PC-9 (cell line): ENCODE measurements at regions of chr1 and their contacts with region 1.

Region 1: DNA sequence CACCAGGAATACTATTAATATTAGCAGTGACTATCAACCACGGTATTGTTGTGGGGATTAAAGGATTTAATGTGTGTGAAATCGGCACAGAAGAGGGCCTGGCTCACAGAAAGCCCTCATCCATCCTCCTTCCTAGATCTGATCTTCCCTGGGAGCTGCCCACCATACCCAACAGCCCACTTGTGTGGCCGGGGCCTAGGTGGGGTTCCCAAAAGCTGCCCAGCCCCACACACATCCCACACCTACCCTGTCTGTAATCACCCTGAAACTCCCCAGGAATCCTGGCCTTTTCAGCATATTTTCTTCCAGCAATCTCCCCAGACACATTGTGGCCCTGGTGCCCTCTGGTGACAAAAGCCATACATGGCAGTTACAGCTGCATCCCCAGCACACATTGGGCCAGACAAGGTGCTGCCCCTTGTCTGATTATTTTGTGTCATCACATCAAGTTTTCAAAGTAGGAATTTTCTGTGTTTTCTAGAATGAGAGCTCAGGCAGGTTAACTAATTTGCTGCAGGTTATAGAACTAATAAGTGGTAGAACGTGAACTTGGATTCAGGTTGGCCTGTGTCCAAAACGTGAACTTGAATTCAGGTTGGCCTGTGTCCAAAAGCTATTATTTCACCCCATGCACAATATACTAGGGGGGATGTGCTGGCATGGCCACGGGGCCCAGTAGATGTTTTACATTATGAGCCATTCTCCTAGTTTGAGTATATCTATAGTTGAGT is 5.3 kb upstream of the SLC6A9 start:
- DNase-seq: peak; percentile 59 to 77
- H3K4me3 ChIP-seq: no peak overlapping the region
- H3K27ac ChIP-seq: peak overlapping the region; percentile 20; the same call in 1 of the 2 replicates
- H3K4me1 ChIP-seq: peaks cover 27% of the 10 kb centered on the region
- H3K27me3 ChIP-seq: no peaks in the 10 kb centered on the region
- CTCF ChIP-seq: peak; percentile 89

Region 2: DNA sequence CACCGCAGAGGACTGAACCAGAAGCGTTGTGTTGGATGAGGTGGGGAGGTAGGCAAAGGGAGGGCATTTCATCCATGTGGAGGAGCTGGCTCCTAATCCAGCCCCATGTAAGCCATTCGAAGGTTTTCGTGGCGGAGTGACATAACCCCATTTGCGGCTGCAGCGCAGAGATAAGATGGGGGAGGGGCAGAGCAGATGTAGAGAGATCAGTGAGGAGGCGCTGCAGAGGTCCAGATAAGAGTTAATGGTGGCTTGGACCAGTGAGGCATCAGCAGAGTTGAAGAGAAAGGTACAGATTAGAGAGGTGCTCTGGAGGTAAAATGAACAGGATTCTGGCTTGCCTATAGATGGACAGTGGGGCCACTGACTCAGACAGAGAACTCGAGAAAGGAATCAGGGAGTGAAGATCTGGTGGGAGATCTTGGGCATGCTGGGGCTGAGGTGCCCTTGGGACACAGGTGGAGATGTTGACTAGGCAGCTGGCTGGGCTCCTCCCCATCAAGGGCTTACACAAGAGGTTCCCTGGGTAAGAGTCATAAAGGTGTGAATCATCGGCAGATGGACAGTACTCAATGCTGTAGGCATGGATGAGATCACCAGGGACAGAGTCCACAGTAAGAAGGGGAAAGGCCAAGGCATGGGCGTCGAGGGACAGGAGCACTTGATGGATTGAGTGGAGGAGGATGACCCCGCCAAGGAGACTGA is 513.6 kb before region 1 on chr1:
- CTCF ChIA-PET with region 1: no interaction called
- POLR2A ChIA-PET with region 1: no interaction called
- intact Hi-C with region 1: no loop called
- DNase-seq: peak; percentile 83 to 97
- H3K4me3 ChIP-seq: no peak overlapping the region
- H3K27ac ChIP-seq: peak overlapping the region; percentile 50
- H3K4me1 ChIP-seq: peaks cover 25% of the 10 kb centered on the region
- H3K27me3 ChIP-seq: no peaks in the 10 kb centered on the region
- CTCF ChIP-seq: no peak

Region 3: DNA sequence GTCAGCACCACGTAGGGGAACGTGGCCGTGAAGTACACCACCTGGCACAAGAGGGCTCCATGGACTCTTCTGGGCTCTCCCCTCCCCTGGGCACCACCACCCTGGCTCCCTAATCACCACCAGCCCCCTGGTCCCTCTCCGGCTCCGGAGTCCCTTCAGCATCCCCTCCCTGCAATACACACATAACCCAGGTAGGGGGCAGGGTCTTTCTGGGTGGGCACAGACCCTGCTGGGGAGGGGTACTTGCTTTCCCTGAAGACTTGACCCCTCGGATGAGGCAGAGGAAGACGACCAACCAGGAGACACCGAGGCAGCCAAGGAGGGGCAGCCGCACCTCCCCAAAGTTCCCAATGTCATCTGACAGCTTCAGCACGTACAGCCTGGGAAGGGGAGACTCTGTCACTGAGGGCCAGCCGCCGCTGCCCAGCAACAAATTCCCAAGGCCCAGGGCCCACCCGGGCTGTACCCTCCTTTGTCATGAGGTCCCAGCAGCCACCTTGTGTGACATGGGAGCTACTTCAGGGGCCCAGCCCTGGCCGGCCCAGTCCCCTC is 33.9 kb before region 1 on chr1:
- CTCF ChIA-PET with region 1: interaction called, 17 read pairs
- POLR2A ChIA-PET with region 1: no interaction called
- intact Hi-C with region 1: loop called (anchors 1 kb)
- DNase-seq: no peak
- H3K4me3 ChIP-seq: no peak overlapping the region
- H3K27ac ChIP-seq: no peak overlapping the region
- H3K4me1 ChIP-seq: no peaks in the 10 kb centered on the region
- H3K27me3 ChIP-seq: no peaks in the 10 kb centered on the region
- CTCF ChIP-seq: peak; percentile 33; the same call in 1 of the 2 replicates